Right ventricle myocardium superior (tissue), 1 donor: ENCODE measurements at regions of chr22 and their contacts with region 1.

Region 1: DNA sequence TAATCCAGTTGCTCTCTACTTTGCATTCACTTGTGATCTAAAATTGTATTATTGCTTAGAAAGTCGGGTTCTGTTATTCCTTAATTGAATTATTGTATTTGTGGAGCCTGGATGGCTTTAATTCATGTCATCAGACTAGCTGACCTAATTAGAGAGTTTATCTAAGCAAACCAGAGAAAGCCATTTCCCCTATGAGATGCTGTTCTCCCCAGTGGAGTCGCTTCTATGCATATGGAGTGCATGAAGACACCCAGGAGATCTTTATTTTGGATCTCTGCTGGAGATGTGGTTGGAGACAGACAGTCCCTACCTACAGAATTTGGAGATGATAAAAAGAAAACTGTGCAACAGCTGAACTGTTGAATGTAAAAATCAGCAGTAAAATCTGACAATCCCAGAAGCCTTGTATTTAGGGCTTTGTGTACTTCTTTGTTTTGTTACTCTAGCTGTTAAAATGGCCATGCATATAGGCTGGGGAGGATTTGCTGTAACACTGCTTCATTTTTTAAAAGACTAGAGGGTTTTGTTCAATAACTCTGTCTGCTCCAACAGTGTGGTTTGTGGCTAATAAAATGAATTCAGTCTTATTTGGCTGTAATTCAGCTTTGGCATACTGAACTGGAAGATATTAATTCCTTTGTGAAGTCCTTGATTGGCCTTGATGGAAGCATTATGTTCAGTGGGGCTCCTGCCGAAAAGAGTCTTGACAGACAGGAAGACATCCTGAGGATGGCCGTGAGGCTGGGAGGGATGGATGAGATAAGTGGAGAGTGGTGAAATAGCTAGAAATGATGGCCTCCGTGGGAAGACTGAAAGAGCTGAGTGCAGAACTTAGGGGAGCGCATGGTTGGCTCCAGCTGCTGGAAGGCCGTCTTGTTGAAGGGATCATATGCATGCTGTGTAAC is 45.0 kb upstream of the MYO18B start:
- DNase-seq: no peak
- ATAC-seq: no peak

Region 2: GRCh38 chr22:25497181-25497641 is 199.8 kb before region 1 on chr22:
- intact Hi-C with region 1: no loop called
- DNase-seq: no peak
- ATAC-seq: peak; percentile 38

Region 3: GRCh38 chr22:25525376-25525775 is 171.6 kb before region 1 on chr22:
- intact Hi-C with region 1: no loop called
- DNase-seq: no peak
- ATAC-seq: no peak

Region 4: GRCh38 chr22:25554238-25554671 is 142.8 kb before region 1 on chr22:
- intact Hi-C with region 1: loop called (anchors 10 kb)
- DNase-seq: no peak
- ATAC-seq: no peak